Esophagus muscularis mucosa (tissue), 4 donors: ENCODE measurements at regions of chr2 and their contacts with region 1.

Region 1: GRCh38 chr2:99559075-99559662 is 69.4 kb upstream of the REV1 start:
- DNase-seq: peak; percentile 97
- H3K4me3 ChIP-seq: no peak overlapping the region
- H3K27ac ChIP-seq: no peak overlapping the region
- H3K4me1 ChIP-seq: no peaks in the 10 kb centered on the region
- H3K27me3 ChIP-seq: no peaks in the 10 kb centered on the region
- CTCF ChIP-seq: peak in 2 of 3 experiments; percentile 98 to 100
- EP300 ChIP-seq: no peak
- POLR2A ChIP-seq: no peak

Region 2: GRCh38 chr2:99451280-99451679 is 107.9 kb before region 1 on chr2:
- intact Hi-C with region 1: no loop called
- DNase-seq: no peak
- H3K4me3 ChIP-seq: peak overlapping the region in 1 of 4 donors; percentile 13
- H3K27ac ChIP-seq: peak overlapping the region in 3 of 4 donors; percentile 12 to 22 (median 16)
- H3K4me1 ChIP-seq: peaks cover 0 to 22% (median 13%) of the 10 kb centered on the region in 4 donors
- H3K27me3 ChIP-seq: no peaks in the 10 kb centered on the region
- CTCF ChIP-seq: no peak
- EP300 ChIP-seq: no peak
- POLR2A ChIP-seq: no peak

Region 3: GRCh38 chr2:99806758-99807157 is 247.6 kb after region 1 on chr2:
- intact Hi-C with region 1: no loop called
- DNase-seq: no peak
- H3K4me3 ChIP-seq: no peak overlapping the region
- H3K27ac ChIP-seq: no peak overlapping the region
- H3K4me1 ChIP-seq: no peaks in the 10 kb centered on the region
- H3K27me3 ChIP-seq: no peaks in the 10 kb centered on the region
- CTCF ChIP-seq: no peak
- EP300 ChIP-seq: no peak
- POLR2A ChIP-seq: no peak

Region 4: GRCh38 chr2:99819766-99820165 is 260.6 kb after region 1 on chr2:
- intact Hi-C with region 1: loop called (anchors 5 kb)
- DNase-seq: no peak
- H3K4me3 ChIP-seq: no peak overlapping the region
- H3K27ac ChIP-seq: no peak overlapping the region
- H3K4me1 ChIP-seq: no peaks in the 10 kb centered on the region
- H3K27me3 ChIP-seq: no peaks in the 10 kb centered on the region
- CTCF ChIP-seq: no peak
- EP300 ChIP-seq: no peak
- POLR2A ChIP-seq: no peak

Region 5: GRCh38 chr2:100242891-100243619 is 683.9 kb after region 1 on chr2:
- intact Hi-C with region 1: loop called (anchors 2 kb)
- DNase-seq: no peak
- H3K4me3 ChIP-seq: no peak overlapping the region
- H3K27ac ChIP-seq: no peak overlapping the region
- H3K4me1 ChIP-seq: peaks cover 6 to 18% (median 7%) of the 10 kb centered on the region in 4 donors
- H3K27me3 ChIP-seq: no peaks in the 10 kb centered on the region
- CTCF ChIP-seq: peak; percentile 76 to 79 (median 76)
- EP300 ChIP-seq: no peak
- POLR2A ChIP-seq: no peak

Region 6: GRCh38 chr2:100262555-100263320 is 703.6 kb after region 1 on chr2:
- intact Hi-C with region 1: loop called (anchors 2 kb)
- DNase-seq: no peak
- H3K4me3 ChIP-seq: peak overlapping the region in 1 of 4 donors; percentile 17
- H3K27ac ChIP-seq: no peak overlapping the region
- H3K4me1 ChIP-seq: peaks cover 2 to 25% (median 15%) of the 10 kb centered on the region in 4 donors
- H3K27me3 ChIP-seq: no peaks in the 10 kb centered on the region
- CTCF ChIP-seq: peak; percentile 95 to 100 (median 99)
- EP300 ChIP-seq: no peak
- POLR2A ChIP-seq: no peak

Region 7: DNA sequence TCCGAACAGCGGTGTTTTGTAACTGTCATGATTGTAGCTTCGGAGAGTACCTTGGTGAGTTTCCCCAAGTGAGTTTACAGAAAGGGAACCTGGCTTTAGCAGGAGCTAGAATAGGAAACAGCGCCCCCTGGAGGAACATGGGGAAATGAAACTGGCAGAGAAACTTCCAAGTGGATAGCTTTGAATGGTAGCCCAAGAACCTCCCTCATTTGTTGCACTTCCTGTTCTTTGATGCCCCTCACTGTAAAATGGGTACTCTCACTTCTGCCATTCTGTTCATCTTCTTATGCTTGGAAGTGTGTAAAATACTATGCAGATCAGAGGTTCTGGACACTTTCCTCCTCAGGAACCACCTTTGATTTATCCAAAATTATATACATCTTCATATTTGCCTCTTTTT is 822.1 kb after region 1 on chr2:
- intact Hi-C with region 1: loop called (anchors 10 kb)
- DNase-seq: no peak
- H3K4me3 ChIP-seq: no peak overlapping the region
- H3K27ac ChIP-seq: no peak overlapping the region
- H3K4me1 ChIP-seq: peaks cover 0 to 10% (median 2%) of the 10 kb centered on the region in 4 donors
- H3K27me3 ChIP-seq: no peaks in the 10 kb centered on the region
- CTCF ChIP-seq: peak; percentile 90 to 96 (median 91)
- EP300 ChIP-seq: no peak
- POLR2A ChIP-seq: no peak